ENCODE measurements at regions of chr12 and their contacts with region 1.

Region 1: GRCh38 chr12:1510056-1510812 is 84.1 kb downstream of the FBXL14 start:
- DNase-seq: no peak
- H3K4me3 ChIP-seq: no peak overlapping the region
- H3K27ac ChIP-seq: no peak overlapping the region
- H3K4me1 ChIP-seq: no peaks in the 10 kb centered on the region
- H3K27me3 ChIP-seq: no peaks in the 10 kb centered on the region
- CTCF ChIP-seq: no peak

Region 2: DNA sequence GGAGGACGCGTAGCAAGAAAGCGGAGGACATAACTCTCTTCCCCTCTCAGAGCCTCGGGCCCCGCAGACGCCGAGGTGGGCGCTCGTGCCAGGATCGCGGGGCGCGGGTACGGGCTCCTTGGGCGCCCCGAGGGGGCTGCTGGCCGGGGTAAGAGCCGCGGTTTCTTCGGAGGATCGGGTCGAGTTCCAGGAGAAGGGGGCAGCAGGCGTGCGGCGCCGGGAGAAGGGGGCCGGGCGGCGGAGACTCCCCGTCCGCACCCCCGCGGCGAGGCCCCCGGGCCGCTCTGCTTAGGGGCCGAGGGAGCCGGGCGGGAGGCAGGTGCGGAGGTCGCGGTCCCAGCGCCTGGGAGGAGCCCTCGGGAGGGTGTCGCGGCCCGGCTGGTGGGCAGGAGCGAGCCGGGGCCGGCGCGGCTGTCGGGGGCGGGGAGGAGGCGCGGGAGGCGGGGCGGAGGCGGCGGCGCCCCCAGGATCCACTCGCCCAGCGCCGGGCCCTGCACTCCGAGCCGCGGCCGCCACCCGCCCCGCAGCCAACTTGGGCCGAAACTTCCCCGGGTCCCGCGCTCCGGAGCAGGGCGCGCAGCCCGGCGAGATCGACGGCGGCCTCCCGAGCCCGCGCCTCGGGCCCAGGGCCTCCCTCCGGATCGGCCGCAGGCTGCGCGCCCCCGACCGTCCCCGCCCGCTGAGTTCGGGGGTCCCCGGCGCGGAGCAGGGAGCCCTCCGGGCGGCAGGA is 19.8 kb after region 1 on chr12:
- CTCF ChIA-PET with region 1: no interaction called
- POLR2A ChIA-PET with region 1: interaction called, 15 read pairs
- intact Hi-C with region 1: no loop called
- DNase-seq: peak in 1 of 2 experiments; percentile 41
- H3K4me3 ChIP-seq: no peak overlapping the region
- H3K27ac ChIP-seq: no peak overlapping the region
- H3K4me1 ChIP-seq: no peaks in the 10 kb centered on the region
- H3K27me3 ChIP-seq: peaks cover 35% of the 10 kb centered on the region
- CTCF ChIP-seq: no peak